Common myeloid progenitor, CD34-positive (primary cell): ENCODE measurements at regions of chr1 and their contacts with region 1.

Region 1: DNA sequence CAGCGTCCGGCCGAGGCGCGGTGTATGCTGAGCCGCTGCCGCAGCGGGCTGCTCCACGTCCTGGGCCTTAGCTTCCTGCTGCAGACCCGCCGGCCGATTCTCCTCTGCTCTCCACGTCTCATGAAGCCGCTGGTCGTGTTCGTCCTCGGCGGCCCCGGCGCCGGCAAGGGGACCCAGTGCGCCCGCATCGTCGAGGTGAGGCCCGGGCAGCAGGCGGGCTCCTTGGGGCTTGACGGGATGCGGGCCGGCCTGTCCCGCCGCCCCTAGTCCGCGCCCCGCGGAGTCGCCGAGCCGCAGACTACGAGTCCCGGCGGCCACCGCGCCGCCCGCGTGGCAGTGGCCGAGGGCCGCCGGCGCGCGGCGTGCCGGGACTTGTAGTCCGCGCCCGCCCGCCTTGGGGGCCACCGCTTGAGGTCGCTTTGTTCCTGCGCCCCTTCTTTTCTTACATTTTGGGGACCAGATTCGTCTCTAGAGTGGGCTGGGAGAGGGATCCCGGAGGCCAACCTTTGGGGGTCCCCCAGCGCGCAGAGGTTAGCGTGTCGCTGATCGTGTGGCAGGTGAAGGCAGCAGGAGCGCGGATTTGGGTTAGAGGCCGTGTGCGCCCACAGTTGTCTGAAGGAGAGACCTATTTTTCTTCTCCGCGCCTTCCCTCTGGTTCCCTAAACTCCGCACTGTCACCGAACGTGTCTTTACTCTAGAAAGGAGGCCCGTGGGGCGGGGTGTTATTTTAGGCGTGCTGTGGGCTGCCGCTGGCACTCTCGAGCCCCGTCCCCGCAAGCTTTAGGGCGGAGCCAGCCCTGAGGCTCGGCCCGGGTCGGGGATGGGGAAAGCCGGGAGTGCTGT is 553 bp downstream of the CMPK1 start:
- DNase-seq: peak; percentile 80 to 89 (median 87)
- H3K4me3 ChIP-seq: peak overlapping the region; percentile 86 to 99 (median 95)
- H3K27ac ChIP-seq: peak overlapping the region; percentile 79 to 91
- H3K4me1 ChIP-seq: peaks cover 5 to 30% (median 19%) of the 10 kb centered on the region in 4 experiments
- H3K27me3 ChIP-seq: no peaks in the 10 kb centered on the region

Region 2: GRCh38 chr1:47323599-47324031 is 10.5 kb before region 1 on chr1:
- CTCF ChIA-PET with region 1: interaction called, 18 read pairs
- POLR2A ChIA-PET with region 1: no interaction called
- DNase-seq: no peak
- H3K4me3 ChIP-seq: no peak overlapping the region
- H3K27ac ChIP-seq: peak overlapping the region in 1 of 2 experiments; percentile 19
- H3K4me1 ChIP-seq: no peaks in the 10 kb centered on the region
- H3K27me3 ChIP-seq: no peaks in the 10 kb centered on the region

Region 3: GRCh38 chr1:47558601-47559593 is 224.8 kb after region 1 on chr1:
- CTCF ChIA-PET with region 1: no interaction called
- POLR2A ChIA-PET with region 1: no interaction called
- DNase-seq: no peak
- H3K4me3 ChIP-seq: no peak overlapping the region
- H3K27ac ChIP-seq: no peak overlapping the region
- H3K4me1 ChIP-seq: peaks cover 0 to 18% (median 6%) of the 10 kb centered on the region in 4 experiments
- H3K27me3 ChIP-seq: peaks cover 0 to 2% (median 0%) of the 10 kb centered on the region in 5 experiments